Activated CD8-positive, alpha-beta T cell treated with anti-CD3 and anti-CD28 coated beads, Interleukin-2, amount 10 ng/mL, durations not matched to agents 7 days and 5 days (primary cell): ENCODE measurements at regions of chr2 and their contacts with region 1.

Region 1: DNA sequence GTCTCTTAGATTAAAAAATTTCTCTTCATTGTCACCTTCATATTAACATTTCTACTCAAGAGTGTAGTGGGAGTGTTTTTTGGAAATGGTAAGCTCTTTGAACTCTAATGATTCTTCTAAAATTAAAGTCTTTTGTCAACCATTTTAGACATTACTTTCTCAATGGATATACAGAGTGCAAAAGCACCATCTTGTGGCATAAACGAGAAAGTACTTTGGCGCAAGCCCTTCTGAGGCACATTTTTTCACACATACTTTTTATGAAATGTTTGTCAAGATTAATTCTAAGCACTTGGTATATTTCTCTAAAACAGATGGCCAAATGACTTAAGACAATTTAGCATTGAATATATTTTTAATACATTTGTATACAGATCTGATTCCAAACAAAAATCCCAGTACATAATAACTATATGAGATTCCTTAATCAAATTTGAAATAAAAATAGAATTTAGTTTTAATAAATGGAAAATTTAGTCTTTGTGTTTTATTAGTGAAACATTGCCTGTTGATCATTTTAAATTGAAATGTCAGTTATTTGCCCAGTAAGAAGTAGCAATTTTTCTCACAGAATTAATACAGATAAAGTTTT is 63.3 kb upstream of the GALNT5 start:
- DNase-seq: peak; percentile 37
- ATAC-seq: no peak
- H3K4me3 Mint-ChIP-seq: no peak overlapping the region
- H3K27ac Mint-ChIP-seq: no peak overlapping the region
- H3K4me1 Mint-ChIP-seq: peaks cover 4% of the 10 kb centered on the region
- H3K27me3 Mint-ChIP-seq: peaks cover 5% of the 10 kb centered on the region

Region 2: DNA sequence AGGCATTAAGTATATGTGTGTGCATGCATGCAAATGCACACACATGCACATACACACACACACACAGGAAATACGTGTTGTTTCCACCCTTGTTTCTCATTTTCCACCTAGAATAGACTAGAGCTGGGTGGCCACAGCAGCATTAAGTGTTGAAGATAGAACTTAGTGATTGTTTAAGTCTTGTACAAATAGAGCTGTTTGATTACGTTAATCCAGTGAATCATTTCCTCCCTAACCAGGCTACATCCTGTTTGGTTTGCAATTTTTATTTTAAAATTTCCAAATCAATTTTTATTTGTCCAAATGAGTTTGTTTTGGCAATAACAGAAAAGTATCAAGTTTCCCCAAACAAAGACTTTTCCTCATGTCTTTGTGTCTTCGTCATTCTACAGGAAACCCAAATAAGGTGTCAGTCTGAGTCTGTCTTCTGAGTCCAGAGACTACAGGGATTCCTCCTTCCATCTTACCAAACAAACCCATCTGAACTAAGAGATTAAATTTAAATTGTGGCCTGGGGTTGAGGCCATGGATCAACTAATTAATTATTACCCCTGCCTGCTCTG is 11.3 kb before region 1 on chr2:
- CTCF ChIA-PET with region 1: interaction called, 18 read pairs
- POLR2A ChIA-PET with region 1: no interaction called
- DNase-seq: no peak
- ATAC-seq: peak; percentile 60
- H3K4me3 Mint-ChIP-seq: no peak overlapping the region
- H3K27ac Mint-ChIP-seq: no peak overlapping the region
- H3K4me1 Mint-ChIP-seq: peaks cover 7% of the 10 kb centered on the region
- H3K27me3 Mint-ChIP-seq: no peaks in the 10 kb centered on the region